Activated naive CD8-positive, alpha-beta T cell treated with anti-CD3 and anti-CD28 coated beads, Interleukin-2, amount 10 ng/mL, durations not matched to agents 7 days and 5 days (primary cell): ENCODE measurements at regions of chr3 and their contacts with region 1.

Region 1: GRCh38 chr3:194671900-194672808 is at the start of gene LSG1:
- DNase-seq: peak; percentile 86
- ATAC-seq: peak; percentile 94
- H3K4me3 Mint-ChIP-seq: peak within 1 kb of the TSS; percentile 98
- H3K27ac Mint-ChIP-seq: peak within 1 kb of the TSS; percentile 94
- H3K4me1 Mint-ChIP-seq: peaks cover 16% of the 10 kb centered on the region
- H3K27me3 Mint-ChIP-seq: peaks cover 3% of the 10 kb centered on the region
- total RNA-seq, gene LSG1: 47.3 to 55.2 TPM

Region 2: DNA sequence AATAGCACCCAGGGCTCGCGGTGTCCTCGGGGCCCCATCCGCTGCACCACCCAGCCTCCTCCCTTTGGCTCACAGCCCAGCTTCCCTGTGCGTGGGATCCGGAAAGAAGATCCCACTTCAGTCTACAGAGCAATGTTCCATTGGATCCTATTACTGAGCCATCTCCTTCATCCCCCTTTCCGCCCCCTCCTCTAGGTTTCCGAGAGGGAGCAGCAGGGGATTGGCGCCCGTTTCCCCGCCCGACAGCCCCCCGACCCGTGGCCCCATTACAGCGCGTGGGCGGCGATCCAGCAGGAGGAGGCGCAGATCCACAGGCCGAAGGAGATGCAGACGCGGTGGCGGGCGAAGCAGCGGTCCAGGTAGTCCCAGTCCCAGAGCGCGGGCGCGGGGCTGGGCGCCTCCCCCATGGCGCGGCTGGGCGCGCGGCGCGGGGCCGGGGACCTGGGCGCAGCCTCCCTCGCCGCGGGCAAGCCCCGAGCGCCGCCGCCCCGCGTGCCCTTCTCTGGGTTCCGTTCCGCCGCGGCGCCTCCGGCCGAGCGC is 39.3 kb before region 1 on chr3:
- POLR2A ChIA-PET with region 1: no interaction called
- DNase-seq: peak; percentile 44
- ATAC-seq: peak; percentile 70
- H3K4me3 Mint-ChIP-seq: peak overlapping the region; percentile 88
- H3K27ac Mint-ChIP-seq: peak overlapping the region; percentile 30
- H3K4me1 Mint-ChIP-seq: peaks cover 5% of the 10 kb centered on the region
- H3K27me3 Mint-ChIP-seq: peaks cover 3% of the 10 kb centered on the region

Region 3: DNA sequence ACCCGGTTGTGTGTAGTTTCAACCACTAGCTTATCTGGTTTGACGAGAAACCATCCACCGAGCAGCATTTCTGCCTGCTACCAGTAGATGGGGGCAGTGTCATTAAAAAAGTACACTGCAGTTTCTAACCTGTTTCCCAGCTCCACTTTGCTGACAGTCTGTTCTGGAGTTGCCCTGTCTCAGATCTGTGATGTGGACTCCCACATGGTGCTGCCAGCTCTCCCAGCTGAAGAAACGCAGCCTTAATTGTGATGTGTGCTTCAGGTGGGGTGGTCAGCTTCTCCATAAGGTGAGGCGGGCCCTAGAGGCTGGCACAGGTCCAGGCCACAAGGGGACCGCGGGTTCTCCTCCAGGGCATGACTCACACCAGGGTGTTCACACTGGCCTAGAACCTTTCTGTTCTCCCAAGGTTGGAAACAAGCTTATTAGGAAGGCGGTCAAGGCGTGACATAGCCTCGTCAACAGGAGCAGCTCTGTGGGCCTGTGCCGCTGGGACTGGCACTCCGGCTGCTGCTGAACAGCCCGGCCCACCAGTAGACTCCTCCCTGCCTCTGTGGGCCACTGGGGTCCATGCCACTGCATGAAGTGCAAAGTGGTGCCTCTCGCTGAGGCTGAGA is 10.6 kb after region 1 on chr3:
- POLR2A ChIA-PET with region 1: interaction called, 20 read pairs
- DNase-seq: peak; percentile 58
- ATAC-seq: peak; percentile 63
- H3K4me3 Mint-ChIP-seq: no peak overlapping the region
- H3K27ac Mint-ChIP-seq: no peak overlapping the region
- H3K4me1 Mint-ChIP-seq: peaks cover 31% of the 10 kb centered on the region
- H3K27me3 Mint-ChIP-seq: peaks cover 23% of the 10 kb centered on the region

Region 4: DNA sequence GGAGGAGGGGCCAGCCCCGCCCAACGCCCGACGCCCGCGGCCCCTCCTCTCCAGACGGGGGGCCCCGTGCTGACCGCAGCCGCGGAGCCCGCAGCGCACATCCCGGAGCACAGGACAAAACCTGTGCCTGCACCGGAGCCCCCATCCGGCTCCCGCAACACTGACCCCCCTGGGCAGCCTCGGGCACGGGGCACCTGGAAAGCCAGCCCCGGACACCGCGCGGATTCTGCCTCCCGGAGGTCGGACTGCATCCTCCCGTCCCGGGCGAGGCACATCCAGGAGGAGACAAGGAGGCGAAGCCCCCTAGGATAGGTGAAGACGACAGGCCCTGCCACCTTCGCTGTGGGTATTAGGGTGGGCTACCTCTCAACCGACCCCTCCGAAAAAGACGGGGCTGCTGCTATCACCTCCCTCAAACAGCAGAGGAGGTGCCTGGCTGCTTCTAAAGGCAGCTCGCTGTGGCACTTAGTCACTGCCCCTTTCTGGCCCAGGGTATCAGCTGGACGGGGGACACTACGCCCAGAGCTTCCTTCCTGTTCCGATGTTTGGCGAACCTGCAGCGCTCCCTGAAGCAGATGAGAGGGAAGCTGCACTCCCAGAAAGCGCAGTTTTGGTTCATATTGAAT is 588.2 kb after region 1 on chr3:
- POLR2A ChIA-PET with region 1: interaction called, 10 read pairs
- DNase-seq: no peak
- ATAC-seq: peak; percentile 18
- H3K4me3 Mint-ChIP-seq: peak overlapping the region; percentile 81
- H3K27ac Mint-ChIP-seq: peak overlapping the region; percentile 49
- H3K4me1 Mint-ChIP-seq: peaks cover 15% of the 10 kb centered on the region
- H3K27me3 Mint-ChIP-seq: no peaks in the 10 kb centered on the region